Lower leg skin (tissue), 4 donors: ENCODE measurements at regions of chr11 and their contacts with region 1.

Region 1: GRCh38 chr11:64001510-64002420 is 15.5 kb downstream of the OTUB1 start:
- DNase-seq: no peak
- H3K4me3 ChIP-seq: no peak overlapping the region
- CTCF ChIP-seq: no peak
- POLR2A ChIP-seq: no peak

Region 2: GRCh38 chr11:64146036-64146962 is 144.5 kb after region 1 on chr11:
- intact Hi-C with region 1: loop called (anchors 2 kb)
- DNase-seq: no peak
- H3K4me3 ChIP-seq: no peak overlapping the region
- CTCF ChIP-seq: no peak
- POLR2A ChIP-seq: no peak